ENCODE measurements at regions of chr10 and their contacts with region 1.

Region 1: GRCh38 chr10:72273410-72274212 is at the start of gene DDIT4:
- DNase-seq: peak; percentile 100
- CTCF ChIP-seq: no peak

Region 2: GRCh38 chr10:71868192-71868697 is 405.4 kb before region 1 on chr10:
- CTCF ChIA-PET with region 1: no interaction called
- POLR2A ChIA-PET with region 1: no interaction called
- DNase-seq: no peak
- CTCF ChIP-seq: no peak

Region 3: GRCh38 chr10:72254813-72255568 is 18.6 kb before region 1 on chr10:
- CTCF ChIA-PET with region 1: interaction called, 25 read pairs
- POLR2A ChIA-PET with region 1: interaction called, 50 read pairs
- DNase-seq: peak; percentile 56
- CTCF ChIP-seq: no peak

Region 4: DNA sequence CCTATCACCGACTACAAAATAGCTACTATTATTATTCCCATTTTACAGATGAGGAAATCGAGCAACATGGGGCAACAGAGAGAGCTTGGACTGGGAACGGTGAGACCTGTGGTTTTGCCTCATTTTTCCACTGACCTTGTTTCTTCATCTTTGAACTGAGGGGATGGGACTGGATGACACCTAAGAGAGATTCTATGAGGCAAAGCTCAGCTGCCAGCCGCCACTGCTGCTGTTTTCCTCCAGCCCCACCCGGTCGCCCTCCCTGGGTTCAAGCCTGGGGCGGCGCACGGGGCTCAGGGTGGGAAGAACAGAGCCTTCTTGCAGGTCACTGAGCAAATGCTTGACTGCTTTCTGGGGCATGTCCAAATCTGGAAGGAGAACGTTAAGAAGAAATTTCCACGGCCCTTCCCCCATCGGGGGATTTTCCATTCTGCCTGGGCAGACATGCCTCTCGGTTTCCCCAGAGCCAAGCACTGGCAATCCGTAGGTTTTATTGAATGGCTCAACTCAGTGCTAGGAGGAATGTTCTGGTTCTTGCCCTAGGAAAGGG is 12.4 kb after region 1 on chr10:
- CTCF ChIA-PET with region 1: interaction called, 54 read pairs
- POLR2A ChIA-PET with region 1: interaction called, 13 read pairs
- DNase-seq: no peak
- CTCF ChIP-seq: no peak

Region 5: DNA sequence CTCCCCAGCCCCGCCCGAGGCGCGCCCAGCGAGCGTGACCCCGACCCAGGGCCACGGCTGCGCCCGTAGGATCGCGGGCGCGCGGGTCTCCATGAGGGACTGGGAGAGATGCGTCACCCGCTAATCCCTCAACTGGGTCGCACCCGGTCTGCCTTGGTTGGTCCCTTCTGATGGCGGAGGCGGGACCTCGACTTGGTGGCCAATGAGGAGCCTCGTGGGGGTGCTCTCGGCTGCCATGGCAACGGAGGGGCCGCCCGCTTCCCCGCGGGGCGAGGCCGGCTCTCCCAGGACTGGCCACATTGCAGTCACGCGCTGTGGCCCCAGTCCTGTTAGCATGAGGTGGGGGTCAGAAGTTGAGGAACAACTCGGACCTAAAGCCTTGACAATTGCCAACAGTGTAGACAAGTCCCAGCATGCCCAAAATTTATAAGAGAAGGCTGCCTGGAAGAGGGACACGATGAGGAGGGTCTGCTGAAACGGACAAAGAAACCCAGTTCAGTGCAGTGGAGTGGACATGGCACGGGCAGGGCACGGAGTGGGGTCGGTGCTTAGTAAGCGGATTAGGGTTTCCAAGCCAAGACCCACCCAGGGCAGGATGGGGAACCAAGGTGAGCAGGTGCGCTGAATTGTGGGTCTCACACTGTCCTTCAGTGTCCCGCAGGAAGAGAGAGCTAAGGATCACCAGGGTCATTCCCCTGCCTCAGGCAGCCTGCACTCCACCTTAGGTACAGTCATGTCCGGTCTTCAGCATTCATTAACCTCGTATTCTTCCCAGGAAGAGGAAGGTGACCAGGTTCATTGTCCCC is 24.6 kb after region 1 on chr10:
- CTCF ChIA-PET with region 1: interaction called, 54 read pairs
- POLR2A ChIA-PET with region 1: interaction called, 86 read pairs
- DNase-seq: peak; percentile 94
- CTCF ChIP-seq: no peak

Region 6: GRCh38 chr10:72331601-72332422 is 58.2 kb after region 1 on chr10:
- CTCF ChIA-PET with region 1: interaction called, 17 read pairs
- POLR2A ChIA-PET with region 1: interaction called, 5 read pairs
- DNase-seq: peak; percentile 63
- CTCF ChIP-seq: no peak